Calu3 (cell line): ENCODE measurements at regions of chr6 and their contacts with region 1.

Region 1: DNA sequence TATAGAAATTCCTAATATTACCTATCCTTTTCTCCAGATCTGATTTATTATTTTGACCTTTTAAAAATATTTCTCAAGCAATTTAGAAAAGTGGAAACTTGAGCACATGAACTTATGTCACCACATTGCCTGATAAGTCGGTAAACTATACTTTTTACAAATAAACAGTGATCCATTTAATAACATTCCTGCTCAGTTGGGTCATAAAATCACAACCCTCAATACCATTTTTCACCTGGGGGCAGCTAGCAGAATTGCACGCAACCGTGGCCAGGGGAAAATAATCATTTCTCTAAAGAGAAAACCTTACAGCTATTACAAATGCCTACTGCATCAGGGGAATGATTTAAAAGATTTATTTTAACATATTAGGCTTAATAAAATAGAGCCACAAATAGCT is 614.5 kb downstream of the PHF3 start:
- DNase-seq: no peak
- H3K4me3 Mint-ChIP-seq: no peak overlapping the region
- H3K27ac Mint-ChIP-seq: no peak overlapping the region
- H3K4me1 Mint-ChIP-seq: peaks cover 9% of the 10 kb centered on the region
- H3K27me3 Mint-ChIP-seq: no peaks in the 10 kb centered on the region
- CTCF ChIP-seq: no peak

Region 2: DNA sequence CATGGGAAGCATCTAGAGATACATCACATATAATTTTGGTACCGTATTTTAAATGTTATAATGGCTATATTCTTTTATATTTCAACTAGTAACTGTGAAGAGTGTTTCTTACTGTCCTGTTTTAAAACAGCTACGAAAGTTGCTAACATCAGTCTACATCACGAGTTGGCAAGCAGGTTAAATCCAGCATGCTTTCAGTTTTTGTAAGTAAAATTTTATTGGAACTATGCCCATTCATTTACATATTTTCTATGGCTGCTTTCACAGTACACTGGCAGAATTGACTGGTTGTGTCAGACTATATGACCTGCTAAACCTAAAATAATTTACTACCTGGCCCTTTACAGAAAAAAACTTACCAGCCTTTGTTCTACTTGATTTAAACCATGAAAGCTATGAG is 136.4 kb before region 1 on chr6:
- CTCF ChIA-PET with region 1: no interaction called
- intact Hi-C with region 1: no loop called
- DNase-seq: no peak
- H3K4me3 Mint-ChIP-seq: no peak overlapping the region
- H3K27ac Mint-ChIP-seq: no peak overlapping the region
- H3K4me1 Mint-ChIP-seq: no peaks in the 10 kb centered on the region
- H3K27me3 Mint-ChIP-seq: no peaks in the 10 kb centered on the region
- CTCF ChIP-seq: no peak

Region 3: GRCh38 chr6:64217721-64218620 is 32.2 kb before region 1 on chr6:
- CTCF ChIA-PET with region 1: no interaction called
- intact Hi-C with region 1: no loop called
- DNase-seq: no peak
- H3K4me3 Mint-ChIP-seq: no peak overlapping the region
- H3K27ac Mint-ChIP-seq: no peak overlapping the region
- H3K4me1 Mint-ChIP-seq: no peaks in the 10 kb centered on the region
- H3K27me3 Mint-ChIP-seq: no peaks in the 10 kb centered on the region
- CTCF ChIP-seq: no peak

Region 4: DNA sequence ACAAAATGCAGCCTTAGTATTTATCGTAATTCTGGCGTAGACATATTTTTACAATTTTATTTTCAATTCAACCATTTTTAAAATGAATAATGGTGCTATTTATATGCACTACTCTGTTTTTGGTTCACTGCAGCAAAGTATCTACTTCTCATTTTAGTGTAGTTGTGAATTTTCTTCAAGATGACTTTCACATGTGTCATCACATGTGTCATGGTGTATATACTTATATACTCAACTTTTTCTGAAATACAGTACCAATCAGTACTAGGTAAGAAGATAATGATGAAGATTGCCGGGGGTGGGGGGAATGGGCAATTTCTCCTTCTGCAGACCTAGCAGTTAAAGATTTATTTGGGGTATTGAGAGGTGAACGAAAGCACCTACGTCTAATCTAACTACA is 20.0 kb after region 1 on chr6:
- CTCF ChIA-PET with region 1: interaction called, 12 read pairs
- intact Hi-C with region 1: no loop called
- DNase-seq: no peak
- H3K4me3 Mint-ChIP-seq: no peak overlapping the region
- H3K27ac Mint-ChIP-seq: no peak overlapping the region
- H3K4me1 Mint-ChIP-seq: no peaks in the 10 kb centered on the region
- H3K27me3 Mint-ChIP-seq: no peaks in the 10 kb centered on the region
- CTCF ChIP-seq: no peak